ENCODE measurements at regions of chr11 and their contacts with region 1.

Region 1: GRCh38 chr11:27910186-27910931 is 197.6 kb downstream of the KIF18A start:
- DNase-seq: no peak
- H3K4me3 ChIP-seq: no peak overlapping the region
- H3K27me3 ChIP-seq: no peaks in the 10 kb centered on the region
- CTCF ChIP-seq: no peak

Region 2: DNA sequence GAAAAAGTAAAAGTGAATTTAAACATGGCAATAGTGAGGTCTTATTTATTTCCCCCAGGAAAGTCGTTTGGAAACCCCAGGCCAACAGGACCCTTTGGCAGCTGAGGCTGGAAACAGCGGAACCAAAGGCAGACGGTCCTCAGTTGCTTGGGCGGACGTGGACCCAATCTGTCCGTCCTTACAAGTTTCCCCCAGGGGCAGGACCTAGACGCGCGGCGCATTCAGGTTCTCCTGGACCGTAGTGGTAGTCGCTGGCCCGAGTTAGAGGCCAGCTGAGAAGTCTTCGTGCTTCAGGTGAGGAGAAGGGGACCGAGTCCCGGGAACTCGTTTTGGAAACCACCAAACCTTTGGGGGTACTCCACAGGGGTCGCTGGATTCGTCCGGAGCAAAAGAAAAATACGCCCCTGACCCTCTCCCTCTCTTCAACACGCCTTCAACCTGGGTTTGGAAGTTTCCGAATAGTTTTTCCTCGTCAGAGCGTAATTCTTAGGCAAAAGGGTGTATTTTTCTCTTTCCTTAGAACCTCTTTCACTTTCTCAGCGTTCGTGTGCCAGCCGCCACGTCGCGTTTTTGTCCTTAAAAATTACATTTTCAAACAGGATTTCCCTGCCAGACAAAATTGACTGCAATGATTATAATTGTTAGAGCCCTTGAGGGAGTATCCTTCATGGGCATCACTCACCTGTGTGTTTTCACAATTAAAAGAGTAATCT is 199.9 kb after region 1 on chr11:
- CTCF ChIA-PET with region 1: no interaction called
- POLR2A ChIA-PET with region 1: interaction called, 11 read pairs
- DNase-seq: no peak
- H3K4me3 ChIP-seq: peak overlapping the region; percentile 62
- H3K27me3 ChIP-seq: no peaks in the 10 kb centered on the region
- CTCF ChIP-seq: no peak